CD4-positive, alpha-beta memory T cell (primary cell): ENCODE measurements at regions of chr6 and their contacts with region 1.

Region 1: DNA sequence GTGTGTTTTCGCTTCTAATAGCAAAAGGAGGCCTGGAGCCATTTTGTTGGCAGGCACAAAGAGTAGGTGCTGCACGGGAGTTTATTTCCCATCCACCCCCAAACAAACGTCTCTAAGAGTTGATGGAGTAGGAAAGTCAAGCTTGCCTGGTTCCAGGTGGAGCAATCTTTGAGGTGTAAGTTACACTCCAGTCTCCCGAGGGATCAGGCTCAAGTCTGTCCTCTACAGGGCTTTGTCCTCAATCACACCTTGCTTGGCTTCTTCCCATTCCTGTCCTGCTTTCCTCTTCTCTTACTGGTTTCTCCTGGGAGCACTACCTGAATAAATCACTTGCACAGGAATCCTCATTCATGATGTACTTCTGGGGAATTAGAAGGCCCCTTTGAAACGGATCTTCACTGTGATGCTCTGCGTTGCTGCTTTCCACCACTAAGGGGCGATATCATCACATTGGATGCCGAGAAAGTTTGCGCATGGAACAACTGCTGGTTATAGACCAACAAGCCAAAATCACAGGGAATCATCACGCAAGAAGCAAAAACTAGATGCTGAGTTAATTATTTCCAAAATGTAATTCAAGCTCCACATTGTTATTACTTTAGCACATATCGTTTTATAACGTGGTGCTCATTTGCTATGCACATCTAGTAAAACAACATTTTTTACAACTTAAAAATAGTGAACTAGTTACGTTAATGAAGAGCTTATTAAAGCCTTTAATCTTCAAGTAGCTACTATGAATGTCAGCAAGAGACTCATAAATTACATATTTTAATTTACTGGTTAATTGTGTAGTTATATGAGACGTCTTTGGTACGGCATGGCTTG is 156.8 kb downstream of the DNAH8 start:
- DNase-seq: peak; percentile 32 to 63 (median 52)
- H3K4me3 ChIP-seq: no peak overlapping the region
- H3K4me3 Mint-ChIP-seq: no peak overlapping the region
- H3K27ac ChIP-seq: no peak overlapping the region
- H3K27ac Mint-ChIP-seq: no peak overlapping the region
- H3K4me1 ChIP-seq: peaks cover 37% of the 10 kb centered on the region
- H3K4me1 Mint-ChIP-seq: peaks cover 19 to 37% (median 27%) of the 10 kb centered on the region in 4 donors
- H3K27me3 ChIP-seq: no peaks in the 10 kb centered on the region
- H3K27me3 Mint-ChIP-seq: peaks cover 1% of the 10 kb centered on the region in 2 donors

Region 2: GRCh38 chr6:38933432-38933831 is 61.5 kb after region 1 on chr6:
- CTCF ChIA-PET with region 1: no interaction called
- POLR2A ChIA-PET with region 1: no interaction called
- intact Hi-C with region 1: loop called (anchors 1 kb)
- DNase-seq: peak in 1 of 5 donors; percentile 11
- H3K4me3 ChIP-seq: no peak overlapping the region
- H3K4me3 Mint-ChIP-seq: no peak overlapping the region
- H3K27ac ChIP-seq: no peak overlapping the region
- H3K27ac Mint-ChIP-seq: no peak overlapping the region
- H3K4me1 ChIP-seq: no peaks in the 10 kb centered on the region
- H3K4me1 Mint-ChIP-seq: no peaks in the 10 kb centered on the region
- H3K27me3 ChIP-seq: no peaks in the 10 kb centered on the region
- H3K27me3 Mint-ChIP-seq: peaks cover 2 to 12% of the 10 kb centered on the region in 2 donors

Region 3: GRCh38 chr6:39102071-39102820 is 230.3 kb after region 1 on chr6:
- CTCF ChIA-PET with region 1: interaction called, 6 read pairs
- POLR2A ChIA-PET with region 1: no interaction called
- intact Hi-C with region 1: loop called (anchors 1 kb)
- DNase-seq: no peak
- H3K4me3 ChIP-seq: no peak overlapping the region
- H3K4me3 Mint-ChIP-seq: no peak overlapping the region
- H3K27ac ChIP-seq: no peak overlapping the region
- H3K27ac Mint-ChIP-seq: no peak overlapping the region
- H3K4me1 ChIP-seq: no peaks in the 10 kb centered on the region
- H3K4me1 Mint-ChIP-seq: peaks cover 4 to 8% (median 8%) of the 10 kb centered on the region in 4 donors
- H3K27me3 ChIP-seq: no peaks in the 10 kb centered on the region
- H3K27me3 Mint-ChIP-seq: no peaks in the 10 kb centered on the region

Region 4: GRCh38 chr6:39166189-39166911 is 294.4 kb after region 1 on chr6:
- CTCF ChIA-PET with region 1: interaction called, 5 read pairs
- POLR2A ChIA-PET with region 1: no interaction called
- intact Hi-C with region 1: loop called (anchors 1 kb)
- DNase-seq: peak; percentile 60 to 72 (median 62)
- H3K4me3 ChIP-seq: no peak overlapping the region
- H3K4me3 Mint-ChIP-seq: peak overlapping the region in 2 of 8 donors; percentile 58
- H3K27ac ChIP-seq: no peak overlapping the region
- H3K27ac Mint-ChIP-seq: no peak overlapping the region
- H3K4me1 ChIP-seq: peaks cover 4% of the 10 kb centered on the region
- H3K4me1 Mint-ChIP-seq: peaks cover 0 to 4% (median 2%) of the 10 kb centered on the region in 4 donors
- H3K27me3 ChIP-seq: no peaks in the 10 kb centered on the region
- H3K27me3 Mint-ChIP-seq: no peaks in the 10 kb centered on the region

Region 5: GRCh38 chr6:39228992-39229767 is 357.2 kb after region 1 on chr6 and contains the start of gene KCNK5:
- CTCF ChIA-PET with region 1: no interaction called
- POLR2A ChIA-PET with region 1: no interaction called
- intact Hi-C with region 1: loop called (anchors 5 kb)
- DNase-seq: peak; percentile 46 to 66 (median 51)
- H3K4me3 ChIP-seq: peak within 1 kb of the TSS; percentile 69 to 70
- H3K4me3 Mint-ChIP-seq: peak within 1 kb of the TSS; percentile 58 to 86 (median 78)
- H3K27ac ChIP-seq: no peak within 1 kb of the TSS
- H3K27ac Mint-ChIP-seq: peak within 1 kb of the TSS in 4 of 7 donors; percentile 29 to 88 (median 64)
- H3K4me1 ChIP-seq: peaks cover 54% of the 10 kb centered on the region
- H3K4me1 Mint-ChIP-seq: peaks cover 26 to 54% (median 37%) of the 10 kb centered on the region in 4 donors
- H3K27me3 ChIP-seq: no peaks in the 10 kb centered on the region
- H3K27me3 Mint-ChIP-seq: peaks cover 0 to 2% of the 10 kb centered on the region in 2 donors
- total RNA-seq, gene KCNK5: 0.79 to 0.83 TPM

Region 6: DNA sequence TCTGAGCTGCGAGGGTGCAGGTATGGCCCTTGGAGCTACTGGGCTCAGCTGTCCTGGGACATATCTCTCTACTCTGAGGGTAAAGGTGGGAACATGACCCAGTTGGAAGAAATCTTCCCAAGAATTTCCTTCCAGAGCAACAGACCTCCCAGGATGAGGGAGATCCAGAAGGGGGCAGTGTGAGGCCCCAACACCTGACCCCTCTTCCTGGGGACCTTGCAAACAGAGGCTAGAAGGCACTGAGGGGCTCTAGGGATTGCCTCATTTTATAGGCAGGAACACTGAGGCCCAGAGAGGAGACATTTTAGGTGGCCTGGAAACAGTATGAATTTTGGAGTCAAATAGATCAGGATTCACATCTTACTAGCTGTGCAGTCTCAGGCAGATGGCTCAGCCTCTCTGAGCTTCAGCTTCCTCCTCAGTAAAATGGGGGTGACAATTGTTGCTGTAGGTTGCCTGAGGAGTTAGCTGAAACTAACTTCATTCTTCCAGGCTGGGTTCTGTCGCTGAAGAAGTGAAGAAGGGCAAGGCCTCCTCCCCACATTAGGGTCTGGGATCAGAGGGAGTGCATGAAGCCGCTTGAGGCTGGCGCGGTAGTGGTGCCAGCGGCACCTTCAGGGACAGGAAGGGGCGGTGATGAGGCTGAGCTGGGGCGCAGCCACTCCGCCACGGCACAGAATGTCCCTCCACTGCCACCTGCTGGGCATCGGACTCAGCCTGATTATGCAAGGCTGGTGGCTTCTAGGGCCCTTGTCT is 430.9 kb after region 1 on chr6:
- CTCF ChIA-PET with region 1: interaction called, 146 read pairs
- POLR2A ChIA-PET with region 1: no interaction called
- intact Hi-C with region 1: loop called (anchors 1 kb)
- DNase-seq: peak; percentile 72 to 80 (median 76)
- H3K4me3 ChIP-seq: peak overlapping the region in 1 of 2 donors; percentile 30
- H3K4me3 Mint-ChIP-seq: peak overlapping the region; percentile 24 to 82 (median 75)
- H3K27ac ChIP-seq: no peak overlapping the region
- H3K27ac Mint-ChIP-seq: peak overlapping the region in 2 of 7 donors; percentile 68 to 69
- H3K4me1 ChIP-seq: no peaks in the 10 kb centered on the region
- H3K4me1 Mint-ChIP-seq: peaks cover 3 to 12% (median 8%) of the 10 kb centered on the region in 4 donors
- H3K27me3 ChIP-seq: no peaks in the 10 kb centered on the region
- H3K27me3 Mint-ChIP-seq: peaks cover 0 to 1% of the 10 kb centered on the region in 2 donors

Region 7: DNA sequence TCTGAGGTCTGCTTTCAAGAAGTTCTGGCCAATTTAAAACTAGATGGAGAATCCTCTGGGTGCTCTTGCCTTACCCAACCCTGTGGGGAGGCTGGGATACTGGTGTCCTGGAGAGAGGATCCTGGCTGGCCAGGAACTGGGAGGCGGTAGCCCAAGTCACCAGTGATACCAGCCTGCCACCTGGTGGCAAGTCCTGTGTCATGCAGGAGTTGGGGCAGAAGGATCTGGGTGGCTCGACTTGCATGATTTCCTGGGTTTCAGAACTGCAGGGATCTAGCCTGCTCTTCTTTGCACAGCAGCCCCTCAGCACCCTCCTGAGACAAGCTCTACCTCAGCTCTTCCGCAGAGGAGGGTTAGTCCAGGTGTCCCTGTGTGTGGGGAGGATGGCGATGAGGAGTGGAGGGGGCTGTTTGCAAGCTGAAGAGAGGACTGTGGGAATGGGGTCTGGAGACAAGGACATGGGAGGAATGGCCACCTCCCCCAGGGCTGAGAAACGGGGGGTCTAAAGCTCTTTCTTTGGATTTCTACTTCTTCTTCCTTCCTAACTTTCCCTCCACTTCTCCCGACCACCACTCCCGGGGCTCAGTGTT is 438.1 kb after region 1 on chr6:
- CTCF ChIA-PET with region 1: interaction called, 146 read pairs
- POLR2A ChIA-PET with region 1: no interaction called
- intact Hi-C with region 1: loop called (anchors 1 kb)
- DNase-seq: peak; percentile 22 to 53 (median 35)
- H3K4me3 ChIP-seq: no peak overlapping the region
- H3K4me3 Mint-ChIP-seq: no peak overlapping the region
- H3K27ac ChIP-seq: no peak overlapping the region
- H3K27ac Mint-ChIP-seq: no peak overlapping the region
- H3K4me1 ChIP-seq: no peaks in the 10 kb centered on the region
- H3K4me1 Mint-ChIP-seq: peaks cover 0 to 13% (median 2%) of the 10 kb centered on the region in 4 donors
- H3K27me3 ChIP-seq: peaks cover 14% of the 10 kb centered on the region
- H3K27me3 Mint-ChIP-seq: peaks cover 20 to 24% of the 10 kb centered on the region in 2 donors